Dendritic cell treated with granulocyte-macrophage colony-stimulating factor and Interleukin-4, amounts not matched to agents 40 ng/mL and 50 ng/mL, for 4 days (primary cell): ENCODE measurements at regions of chr2 and their contacts with region 1.

Region 1: DNA sequence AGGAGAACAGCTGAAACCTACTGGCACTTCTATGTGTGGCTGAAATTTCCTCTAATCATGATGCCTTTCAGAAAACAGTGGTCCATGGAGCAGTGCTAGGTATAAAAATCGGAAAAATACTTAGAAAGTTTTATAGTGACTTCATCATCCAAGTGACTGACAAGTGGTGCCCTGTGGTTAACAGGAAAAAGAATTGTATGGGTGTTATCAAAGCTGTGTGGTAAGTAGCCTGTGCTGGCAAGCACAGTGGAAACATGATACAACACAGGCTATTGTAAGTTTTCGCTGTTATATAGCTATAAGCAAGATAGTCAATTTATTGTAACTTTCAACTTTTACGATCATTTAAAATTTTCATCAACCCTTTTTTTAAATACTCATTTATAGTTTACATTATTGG is 1599.7 kb upstream of the ZEB2 start:
- H3K4me3 Mint-ChIP-seq: no peak overlapping the region
- H3K27ac Mint-ChIP-seq: no peak overlapping the region
- H3K4me1 Mint-ChIP-seq: no peaks in the 10 kb centered on the region
- H3K27me3 Mint-ChIP-seq: no peaks in the 10 kb centered on the region

Region 2: GRCh38 chr2:146108993-146109392 is 10.6 kb before region 1 on chr2:
- intact Hi-C with region 1: loop called (anchors 1 kb)
- H3K4me3 Mint-ChIP-seq: no peak overlapping the region
- H3K27ac Mint-ChIP-seq: no peak overlapping the region
- H3K4me1 Mint-ChIP-seq: no peaks in the 10 kb centered on the region
- H3K27me3 Mint-ChIP-seq: no peaks in the 10 kb centered on the region